Caco-2 (cell line): ENCODE measurements at regions of chr16 and their contacts with region 1.

Region 1: GRCh38 chr16:52781005-52781630 is 234.2 kb upstream of the TOX3 start:
- DNase-seq: no peak
- H3K4me3 ChIP-seq: no peak overlapping the region
- H3K4me3 Mint-ChIP-seq: no peak overlapping the region
- H3K27ac Mint-ChIP-seq: no peak overlapping the region
- H3K4me1 ChIP-seq: no peaks in the 10 kb centered on the region
- H3K4me1 Mint-ChIP-seq: no peaks in the 10 kb centered on the region
- H3K27me3 ChIP-seq: no peaks in the 10 kb centered on the region; the same call in 1 of the 2 replicates
- H3K27me3 Mint-ChIP-seq: peaks cover 9% of the 10 kb centered on the region
- CTCF ChIP-seq: no peak

Region 2: DNA sequence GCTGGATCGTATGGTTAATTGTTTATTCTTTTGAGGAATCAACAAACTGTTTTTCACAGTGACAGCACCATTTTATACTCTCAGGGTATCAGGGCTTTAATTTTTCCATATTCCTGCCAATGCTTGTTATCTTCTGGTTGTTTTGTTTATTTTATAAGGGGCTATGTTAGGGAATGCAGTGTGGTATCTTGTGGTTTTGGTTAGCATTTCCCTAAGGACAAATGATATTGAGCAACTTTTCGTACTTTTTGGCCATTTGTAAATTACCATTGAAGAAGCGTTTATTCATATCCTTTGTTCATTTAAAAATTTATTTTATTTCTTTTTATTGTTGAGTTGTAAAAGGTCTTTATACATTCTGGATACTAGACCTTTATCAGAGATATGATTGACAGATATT is 1308.0 kb before region 1 on chr16:
- CTCF ChIA-PET with region 1: interaction called, 10 read pairs
- POLR2A ChIA-PET with region 1: no interaction called
- intact Hi-C with region 1: no loop called
- DNase-seq: no peak
- H3K4me3 ChIP-seq: no peak overlapping the region
- H3K4me3 Mint-ChIP-seq: no peak overlapping the region
- H3K27ac Mint-ChIP-seq: no peak overlapping the region
- H3K4me1 ChIP-seq: no peaks in the 10 kb centered on the region
- H3K4me1 Mint-ChIP-seq: no peaks in the 10 kb centered on the region
- H3K27me3 ChIP-seq: no peaks in the 10 kb centered on the region
- H3K27me3 Mint-ChIP-seq: no peaks in the 10 kb centered on the region
- CTCF ChIP-seq: no peak

Region 3: GRCh38 chr16:52528393-52529065 is 252.6 kb before region 1 on chr16:
- CTCF ChIA-PET with region 1: no interaction called
- POLR2A ChIA-PET with region 1: no interaction called
- intact Hi-C with region 1: no loop called
- DNase-seq: no peak
- H3K4me3 ChIP-seq: no peak overlapping the region
- H3K4me3 Mint-ChIP-seq: no peak overlapping the region
- H3K27ac Mint-ChIP-seq: no peak overlapping the region
- H3K4me1 ChIP-seq: no peaks in the 10 kb centered on the region
- H3K4me1 Mint-ChIP-seq: peaks cover 6% of the 10 kb centered on the region
- H3K27me3 ChIP-seq: no peaks in the 10 kb centered on the region
- H3K27me3 Mint-ChIP-seq: no peaks in the 10 kb centered on the region
- CTCF ChIP-seq: peak in 1 of 2 experiments; percentile 13